Activated T-helper 1 cell treated with anti-CD3 and anti-CD28 coated beads, Interleukin-12 subunit alpha, Interleukin-12 subunit beta, Interleukin-2, Interleukin-4 antibody, amounts not matched to agents 30 ng/mL and 10 ng/mL and 1 ng/mL, durations not matched to agents 14 hours and 24 hours and 36 hours (primary cell): ENCODE measurements at regions of chr9 and their contacts with region 1.

Region 1: DNA sequence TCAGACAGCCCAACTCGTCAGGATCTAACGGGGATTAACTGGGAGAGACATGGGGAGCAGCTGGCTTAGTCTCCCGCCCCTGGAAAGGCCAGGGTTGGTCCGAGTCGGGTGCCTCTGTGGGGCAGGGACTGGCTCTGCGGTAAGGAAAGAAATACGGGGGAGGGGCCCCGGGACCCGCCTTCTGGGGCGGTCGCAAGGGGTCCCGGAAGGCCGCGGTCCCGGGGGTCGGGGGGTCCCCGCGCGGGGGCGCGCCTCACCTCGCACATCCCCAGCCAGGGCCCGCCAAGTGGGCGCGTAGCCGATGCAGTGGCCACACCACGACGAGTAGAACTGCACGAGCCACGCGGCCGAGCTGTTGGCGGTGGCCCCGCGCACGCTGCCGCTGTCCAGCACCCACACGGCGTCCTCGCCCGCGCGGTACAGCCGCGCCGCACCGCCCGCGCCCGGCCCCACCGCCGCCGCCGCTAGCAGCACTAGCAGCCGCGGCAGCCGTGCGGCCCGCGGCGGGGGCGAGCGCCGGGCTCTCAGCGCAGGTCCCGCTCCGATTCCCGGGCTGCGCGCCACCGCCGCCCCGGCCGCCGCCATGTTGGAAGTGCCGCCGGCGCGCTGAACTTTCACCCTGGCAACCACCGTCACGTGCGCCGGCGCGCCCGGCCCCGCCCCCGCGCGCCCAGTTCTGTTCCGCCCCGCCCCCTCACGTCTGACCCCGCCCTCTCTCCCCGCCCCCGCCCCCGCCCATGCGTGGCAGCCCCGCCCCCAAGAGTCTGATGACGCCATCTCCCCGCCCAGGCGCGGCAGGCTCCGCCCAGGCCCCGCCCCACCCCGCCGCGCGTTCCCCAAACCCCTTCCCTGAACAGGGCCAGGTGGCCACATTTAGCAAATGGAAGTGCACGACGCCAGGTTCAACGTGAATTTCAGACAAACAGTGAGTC is at the start of gene QSOX2:
- DNase-seq: peak; percentile 77
- H3K4me3 Mint-ChIP-seq: peak within 1 kb of the TSS; percentile 96
- H3K27ac Mint-ChIP-seq: peak within 1 kb of the TSS; percentile 96
- H3K4me1 Mint-ChIP-seq: peaks cover 24% of the 10 kb centered on the region
- H3K27me3 Mint-ChIP-seq: no peaks in the 10 kb centered on the region
- total RNA-seq, gene QSOX2: 27.9 and 28.6 TPM in 2 replicates

Region 2: DNA sequence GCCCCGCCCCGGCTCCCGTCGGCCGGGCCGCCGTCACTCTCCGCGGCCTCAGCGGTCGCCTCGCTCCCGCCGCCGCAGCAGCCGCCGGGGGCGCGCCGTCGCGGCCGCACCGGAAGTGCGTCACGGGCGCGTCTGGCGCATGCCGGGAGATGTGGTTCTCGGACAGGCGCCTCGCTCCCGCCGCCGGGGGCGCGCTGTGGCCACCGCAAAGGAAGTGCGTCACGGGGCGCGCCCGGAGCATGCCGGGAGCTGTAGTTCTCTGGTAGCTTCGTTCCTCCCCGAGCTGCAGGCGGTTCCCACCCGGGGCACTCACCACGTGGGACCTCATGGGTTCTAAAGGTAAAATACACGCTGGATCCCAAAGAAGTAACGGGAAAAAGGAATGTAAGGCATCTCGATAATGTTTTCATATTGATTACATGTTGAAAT is 284.2 kb before region 1 on chr9 and contains the start of gene UBAC1:
- intact Hi-C with region 1: loop called (anchors 10 kb)
- DNase-seq: peak; percentile 93
- H3K4me3 Mint-ChIP-seq: peak within 1 kb of the TSS; percentile 87
- H3K27ac Mint-ChIP-seq: peak within 1 kb of the TSS; percentile 82
- H3K4me1 Mint-ChIP-seq: peaks cover 25% of the 10 kb centered on the region
- H3K27me3 Mint-ChIP-seq: peaks cover 8% of the 10 kb centered on the region
- total RNA-seq, gene UBAC1: 41.9 and 42.0 TPM in 2 replicates

Region 3: DNA sequence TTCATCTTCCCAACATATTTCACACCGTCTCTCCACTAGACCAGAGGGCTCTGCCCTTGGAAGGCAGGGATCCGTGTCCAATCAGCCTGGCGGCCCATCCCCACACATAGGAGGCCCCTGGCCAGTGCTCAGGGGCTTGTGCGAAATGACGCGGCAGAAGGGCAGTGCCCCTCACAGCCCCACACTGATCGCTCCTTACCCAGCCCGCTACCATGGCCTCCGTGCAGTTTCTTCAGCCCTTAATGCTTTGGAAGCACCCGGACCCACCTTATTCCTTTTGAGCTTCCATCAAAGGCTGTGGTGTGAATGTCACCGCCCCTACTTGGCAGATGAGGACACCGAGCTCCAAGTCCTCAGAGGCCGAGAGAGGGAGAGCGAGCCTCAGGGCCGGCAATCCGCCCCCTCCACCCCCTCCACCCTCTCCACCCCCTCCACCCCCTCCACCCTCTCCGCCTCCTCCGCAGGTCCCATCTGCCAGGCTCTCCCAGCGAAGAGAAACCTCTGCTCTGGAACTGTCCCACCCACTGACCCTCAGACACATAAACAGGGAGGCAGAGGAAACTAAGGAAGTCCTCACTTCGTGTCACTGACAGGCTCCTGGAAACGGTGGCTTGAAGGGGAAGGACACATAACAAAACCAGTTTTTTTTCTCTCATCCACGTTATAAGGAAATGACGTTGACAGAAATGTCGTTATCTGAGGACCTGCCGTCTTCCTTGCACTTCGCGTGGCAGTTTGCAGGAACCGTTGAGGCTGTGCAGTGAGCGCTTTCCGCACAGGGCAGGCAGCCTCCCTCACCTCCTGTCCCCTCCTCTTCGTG is 13.8 kb before region 1 on chr9:
- intact Hi-C with region 1: loop called (anchors 1 kb)
- DNase-seq: peak; percentile 35
- H3K4me3 Mint-ChIP-seq: peak overlapping the region; percentile 68
- H3K27ac Mint-ChIP-seq: peak overlapping the region; percentile 92
- H3K4me1 Mint-ChIP-seq: peaks cover 50% of the 10 kb centered on the region
- H3K27me3 Mint-ChIP-seq: no peaks in the 10 kb centered on the region

Region 4: DNA sequence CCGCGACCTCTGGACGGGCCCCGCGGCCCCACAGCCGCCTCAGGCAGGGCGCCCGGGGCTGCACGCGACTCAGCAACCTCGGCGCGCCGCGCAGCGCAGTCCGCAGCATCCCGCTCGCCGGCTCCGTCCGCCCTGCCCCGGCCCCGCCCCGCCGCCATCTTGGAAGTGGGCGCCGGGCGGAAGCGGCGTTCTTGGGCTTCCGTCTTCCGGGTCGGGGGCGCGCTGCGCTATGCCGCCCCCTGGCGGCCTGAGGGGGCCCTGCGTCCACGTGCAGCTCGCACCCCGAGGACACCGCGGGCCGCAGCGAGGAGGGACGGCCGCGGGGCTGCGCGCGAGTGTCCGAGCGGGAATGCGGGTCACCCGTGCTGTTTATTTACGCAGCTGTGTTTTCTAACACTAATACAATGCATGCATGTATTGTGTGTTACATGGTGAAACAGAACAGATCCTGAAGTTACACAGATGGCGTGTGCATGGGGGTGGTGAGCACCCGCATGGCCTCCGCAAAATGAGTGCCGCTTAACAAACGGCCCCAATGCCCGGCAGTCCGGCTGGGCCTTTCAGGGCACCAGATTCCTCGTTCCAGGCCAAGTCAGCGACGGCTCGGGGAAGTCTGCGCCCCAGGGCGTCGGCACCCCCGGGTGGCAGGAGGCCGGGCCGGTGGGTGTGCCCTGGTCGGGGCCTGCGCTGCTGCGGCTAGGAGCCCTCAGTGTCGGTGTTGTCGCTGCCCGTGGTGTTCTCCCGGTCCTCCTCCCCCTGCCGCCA is 118.3 kb after region 1 on chr9 and contains the start of gene DNLZ:
- intact Hi-C with region 1: loop called (anchors 1 kb)
- DNase-seq: peak; percentile 83
- H3K4me3 Mint-ChIP-seq: peak within 1 kb of the TSS; percentile 83
- H3K27ac Mint-ChIP-seq: peak within 1 kb of the TSS; percentile 79
- H3K4me1 Mint-ChIP-seq: peaks cover 6% of the 10 kb centered on the region
- H3K27me3 Mint-ChIP-seq: no peaks in the 10 kb centered on the region
- total RNA-seq, gene DNLZ: 35.2 TPM in 2 replicates

Region 5: GRCh38 chr9:136533775-136534157 is 288.3 kb after region 1 on chr9:
- intact Hi-C with region 1: loop called (anchors 5 kb)
- DNase-seq: peak; percentile 72
- H3K4me3 Mint-ChIP-seq: peak overlapping the region; percentile 71
- H3K27ac Mint-ChIP-seq: peak overlapping the region; percentile 86
- H3K4me1 Mint-ChIP-seq: peaks cover 30% of the 10 kb centered on the region
- H3K27me3 Mint-ChIP-seq: no peaks in the 10 kb centered on the region

Region 6: DNA sequence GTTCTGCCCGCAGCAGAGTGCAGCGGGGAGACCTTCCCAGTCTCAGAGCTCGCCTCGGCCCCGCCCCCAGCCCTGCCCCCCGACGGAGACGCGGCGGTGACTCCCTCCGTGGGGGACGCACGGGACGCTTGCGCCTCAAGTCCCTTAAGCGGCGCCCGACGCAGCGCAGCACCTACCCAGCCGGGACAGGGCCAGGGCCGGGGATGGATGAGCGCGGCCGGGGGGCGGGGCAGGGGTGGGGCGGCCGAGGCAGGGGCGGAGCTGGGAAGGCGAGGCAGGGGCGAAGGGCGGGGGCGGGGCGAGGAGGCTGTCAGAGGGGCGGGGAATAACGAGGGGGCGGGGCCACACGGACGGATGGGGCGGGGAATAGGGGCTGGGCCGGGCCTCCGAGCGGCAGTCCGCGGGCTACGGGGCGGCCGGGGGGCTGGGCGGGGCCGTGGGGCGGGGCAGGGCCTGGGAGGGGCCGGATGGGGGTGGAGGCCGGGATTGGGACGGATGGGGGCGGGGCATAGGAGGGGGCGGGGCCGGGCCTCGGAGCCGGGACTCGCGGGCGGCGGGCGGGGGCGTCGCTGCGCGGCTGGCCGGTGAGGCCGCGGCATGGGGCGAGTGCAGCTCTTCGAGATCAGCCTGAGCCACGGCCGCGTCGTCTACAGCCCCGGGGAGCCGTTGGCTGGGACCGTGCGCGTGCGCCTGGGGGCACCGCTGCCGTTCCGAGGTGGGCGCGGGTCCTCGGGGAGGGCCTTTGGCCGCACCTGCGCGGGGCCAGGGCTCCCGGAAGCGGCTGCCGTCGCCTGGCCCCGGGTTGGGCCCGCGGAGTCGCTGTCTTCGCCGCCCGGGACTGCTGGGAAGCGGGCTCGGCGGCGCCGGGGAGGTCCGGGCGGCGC is 1359.9 kb after region 1 on chr9 and contains the start of gene ARRDC1:
- intact Hi-C with region 1: loop called (anchors 10 kb)
- DNase-seq: peak; percentile 85
- H3K4me3 Mint-ChIP-seq: peak within 1 kb of the TSS; percentile 85
- H3K27ac Mint-ChIP-seq: peak within 1 kb of the TSS; percentile 74
- H3K4me1 Mint-ChIP-seq: peaks cover 20% of the 10 kb centered on the region
- H3K27me3 Mint-ChIP-seq: peaks cover 6% of the 10 kb centered on the region
- total RNA-seq, gene ARRDC1: 65.7 and 70.3 TPM in 2 replicates